ENCODE measurements at regions of chr4 and their contacts with region 1.

Region 1: GRCh38 chr4:158729716-158730559 is 6.7 kb upstream of the PPID start:
- DNase-seq: peak; percentile 45
- H3K4me3 ChIP-seq: no peak overlapping the region
- H3K27ac ChIP-seq: no peak overlapping the region
- H3K4me1 ChIP-seq: no peaks in the 10 kb centered on the region
- H3K27me3 ChIP-seq: peaks cover 2% of the 10 kb centered on the region
- CTCF ChIP-seq: peak; percentile 91 to 94

Region 2: DNA sequence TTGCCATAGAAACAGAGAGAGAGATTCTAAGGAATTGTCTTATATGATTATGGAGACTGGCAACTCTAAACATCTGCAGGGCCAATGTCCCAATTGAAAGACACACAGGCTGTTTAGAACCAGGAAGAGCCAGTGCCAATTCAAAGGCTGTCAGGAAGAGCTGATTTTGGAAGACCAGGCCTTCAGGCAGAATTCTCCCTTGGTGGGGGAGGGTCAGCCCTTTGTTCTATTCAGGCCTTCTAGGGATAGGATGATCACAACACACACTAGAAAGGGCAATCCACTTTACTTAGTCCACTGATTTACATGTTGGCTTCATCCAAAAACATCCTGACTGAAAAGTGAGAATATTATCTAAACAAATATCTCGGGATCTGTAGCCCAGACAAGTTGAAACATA is 73.5 kb before region 1 on chr4:
- CTCF ChIA-PET with region 1: no interaction called
- dilution Hi-C with region 1: no loop called
- in situ Hi-C with region 1: no loop called
- intact Hi-C with region 1: no loop called
- DNase-seq: no peak
- H3K4me3 ChIP-seq: no peak overlapping the region
- H3K27ac ChIP-seq: no peak overlapping the region
- H3K4me1 ChIP-seq: no peaks in the 10 kb centered on the region
- H3K27me3 ChIP-seq: no peaks in the 10 kb centered on the region
- CTCF ChIP-seq: no peak

Region 3: GRCh38 chr4:158768555-158769174 is 38.7 kb after region 1 on chr4 and contains the start of gene FNIP2:
- CTCF ChIA-PET with region 1: interaction called, 4 read pairs
- dilution Hi-C with region 1: no loop called
- in situ Hi-C with region 1: no loop called
- intact Hi-C with region 1: loop called (anchors 2 kb)
- DNase-seq: peak; percentile 61
- H3K4me3 ChIP-seq: peak within 1 kb of the TSS; percentile 67 to 98 (median 94)
- H3K27ac ChIP-seq: peak within 1 kb of the TSS; percentile 49
- H3K4me1 ChIP-seq: peaks cover 13% of the 10 kb centered on the region
- H3K27me3 ChIP-seq: no peaks in the 10 kb centered on the region
- CTCF ChIP-seq: no peak
- total RNA-seq, gene FNIP2: 13.0 to 29.5 TPM

Region 4: DNA sequence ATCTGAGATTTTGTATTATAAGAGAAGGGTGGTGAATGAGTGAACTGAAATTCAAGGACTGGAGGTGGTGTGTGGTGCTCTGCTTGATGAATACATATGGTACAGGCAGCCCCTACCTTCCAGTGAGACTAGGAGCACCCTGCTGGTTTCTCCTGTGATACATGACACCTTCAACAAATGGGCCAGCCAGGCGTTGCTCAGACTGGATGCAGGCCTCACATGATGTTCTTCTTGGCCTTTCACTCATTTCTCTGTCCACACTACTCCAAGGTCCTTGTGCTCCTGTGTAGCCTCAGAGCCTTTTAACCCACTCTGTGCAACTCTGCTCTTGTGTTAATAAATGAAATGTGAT is 106.1 kb after region 1 on chr4:
- CTCF ChIA-PET with region 1: no interaction called
- dilution Hi-C with region 1: no loop called
- in situ Hi-C with region 1: loop called in 1 of 2 experiments (anchors 10 kb)
- intact Hi-C with region 1: no loop called
- DNase-seq: no peak
- H3K4me3 ChIP-seq: no peak overlapping the region
- H3K27ac ChIP-seq: no peak overlapping the region
- H3K4me1 ChIP-seq: peaks cover 10% of the 10 kb centered on the region
- H3K27me3 ChIP-seq: no peaks in the 10 kb centered on the region
- CTCF ChIP-seq: no peak

Region 5: DNA sequence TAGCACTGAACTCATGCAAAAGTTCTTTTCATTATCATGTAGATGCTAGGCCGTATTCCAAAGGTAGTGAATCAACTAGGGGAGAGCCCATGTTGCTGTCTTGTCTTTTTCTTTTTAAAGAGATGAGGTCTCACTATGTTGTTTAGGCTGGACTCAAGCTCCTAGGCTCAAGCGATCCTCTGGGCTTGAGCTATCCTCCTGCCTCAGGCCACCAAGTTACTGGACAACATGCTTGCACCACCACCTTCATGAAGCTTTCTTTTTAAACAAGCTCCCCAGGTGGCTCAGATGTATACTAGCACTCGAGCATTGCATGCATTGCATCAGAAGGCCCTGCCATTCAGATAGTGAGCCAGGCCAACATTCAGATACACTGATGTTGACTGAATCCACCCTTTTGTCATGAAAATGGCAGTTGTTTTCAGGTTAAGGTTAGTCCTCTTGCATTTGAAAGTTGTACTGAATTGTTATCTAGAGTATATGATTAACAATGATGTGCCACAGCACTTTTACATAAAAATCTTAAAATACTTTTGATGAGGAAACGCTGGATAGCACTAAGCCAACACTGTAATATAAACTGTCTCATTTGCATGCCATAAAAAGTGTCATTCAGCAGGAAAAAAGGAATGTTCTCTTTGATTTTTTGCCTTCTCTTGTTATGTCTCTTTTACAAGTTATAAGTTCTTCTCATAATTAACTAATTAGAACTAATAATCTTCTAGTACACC is 115.5 kb after region 1 on chr4:
- CTCF ChIA-PET with region 1: no interaction called
- dilution Hi-C with region 1: no loop called
- in situ Hi-C with region 1: loop called (anchors 5 to 10 kb)
- intact Hi-C with region 1: loop called (anchors 1 kb)
- DNase-seq: no peak
- H3K4me3 ChIP-seq: no peak overlapping the region
- H3K27ac ChIP-seq: no peak overlapping the region
- H3K4me1 ChIP-seq: no peaks in the 10 kb centered on the region
- H3K27me3 ChIP-seq: no peaks in the 10 kb centered on the region
- CTCF ChIP-seq: no peak

Region 6: DNA sequence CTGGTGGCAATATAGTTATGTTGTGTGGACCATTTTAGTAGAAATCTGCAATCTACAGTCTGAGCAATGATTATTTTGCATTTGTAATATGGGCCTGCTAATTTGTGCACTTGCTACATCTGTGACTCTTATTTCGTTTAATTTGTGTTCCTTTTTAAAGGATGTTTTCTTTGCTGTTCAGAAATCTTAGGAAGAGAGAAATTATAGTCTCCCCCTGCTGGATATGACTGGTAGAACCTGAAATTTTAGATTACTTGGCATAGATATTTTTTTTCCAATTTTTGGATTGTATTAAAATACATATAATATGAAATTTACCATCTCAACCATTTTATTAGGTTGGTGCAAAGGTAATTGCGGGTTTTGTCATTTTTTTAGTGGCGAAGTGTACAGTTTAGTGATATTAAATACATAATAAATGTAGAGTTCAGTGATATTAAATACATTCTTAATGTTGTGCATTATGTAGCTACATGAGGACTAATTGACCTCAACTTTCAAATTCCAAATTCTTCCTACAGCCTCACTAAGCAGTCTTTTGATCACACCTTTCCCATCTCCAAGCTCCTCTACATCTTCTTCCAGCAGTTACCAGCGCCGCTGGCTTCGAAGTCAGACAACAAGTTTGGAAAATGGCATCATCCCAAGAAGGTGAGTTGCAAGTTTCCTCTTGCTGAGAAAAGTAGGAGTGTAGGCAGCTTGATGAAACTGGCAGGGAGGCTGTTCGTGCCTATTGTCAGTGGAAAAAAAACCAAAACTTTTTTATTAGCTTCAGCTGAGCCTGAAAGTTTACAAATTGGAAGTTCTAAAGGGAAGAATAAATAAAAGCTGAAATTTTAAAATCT is 121.1 kb after region 1 on chr4:
- CTCF ChIA-PET with region 1: interaction called, 5 read pairs
- dilution Hi-C with region 1: no loop called
- in situ Hi-C with region 1: loop called (anchors 5 to 10 kb)
- intact Hi-C with region 1: loop called (anchors 1 kb)
- DNase-seq: no peak
- H3K4me3 ChIP-seq: no peak overlapping the region
- H3K27ac ChIP-seq: no peak overlapping the region
- H3K4me1 ChIP-seq: no peaks in the 10 kb centered on the region
- H3K27me3 ChIP-seq: no peaks in the 10 kb centered on the region
- CTCF ChIP-seq: peak; percentile 55 to 56

Region 7: GRCh38 chr4:158970812-158971211 is 240.9 kb after region 1 on chr4:
- CTCF ChIA-PET with region 1: no interaction called
- dilution Hi-C with region 1: no loop called
- in situ Hi-C with region 1: no loop called
- intact Hi-C with region 1: no loop called
- DNase-seq: no peak
- H3K4me3 ChIP-seq: no peak overlapping the region
- H3K27ac ChIP-seq: no peak overlapping the region
- H3K4me1 ChIP-seq: no peaks in the 10 kb centered on the region
- H3K27me3 ChIP-seq: no peaks in the 10 kb centered on the region
- CTCF ChIP-seq: no peak

Region 8: GRCh38 chr4:159175085-159175988 is 445.4 kb after region 1 on chr4:
- CTCF ChIA-PET with region 1: no interaction called
- dilution Hi-C with region 1: no loop called
- in situ Hi-C with region 1: no loop called
- intact Hi-C with region 1: loop called (anchors 1 kb)
- DNase-seq: peak; percentile 80
- H3K4me3 ChIP-seq: peak overlapping the region; percentile 8 to 28 (median 24)
- H3K27ac ChIP-seq: peak overlapping the region; percentile 28
- H3K4me1 ChIP-seq: peaks cover 16% of the 10 kb centered on the region
- H3K27me3 ChIP-seq: no peaks in the 10 kb centered on the region
- CTCF ChIP-seq: peak; percentile 60 to 76

Region 9: DNA sequence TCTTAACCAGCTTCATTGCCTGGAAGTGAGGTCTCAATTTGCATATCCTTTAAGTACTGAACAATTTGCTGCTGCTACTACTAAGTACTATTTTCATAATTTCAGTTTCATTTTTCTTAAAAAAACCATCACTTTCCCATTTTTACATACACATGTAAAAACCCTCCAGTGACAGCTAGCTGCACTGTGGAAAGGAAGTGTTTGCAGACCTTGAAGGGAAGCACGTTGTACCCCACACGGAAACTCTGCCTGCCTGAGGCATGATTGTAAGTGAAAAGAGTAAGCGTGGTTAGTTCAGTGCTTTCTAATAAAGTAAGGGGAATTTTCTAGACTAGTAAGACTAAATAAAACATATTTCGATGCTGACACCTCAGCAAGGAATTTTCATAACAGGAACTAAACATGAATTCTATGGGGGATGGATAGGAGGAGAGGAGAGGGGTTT is 476.5 kb after region 1 on chr4:
- CTCF ChIA-PET with region 1: no interaction called
- dilution Hi-C with region 1: no loop called
- in situ Hi-C with region 1: loop called (anchors 10 kb)
- intact Hi-C with region 1: loop called (anchors 1 kb)
- DNase-seq: peak; percentile 60
- H3K4me3 ChIP-seq: peak overlapping the region in 1 of 3 experiments; percentile 20
- H3K27ac ChIP-seq: peak overlapping the region; percentile 20
- H3K4me1 ChIP-seq: peaks cover 7% of the 10 kb centered on the region
- H3K27me3 ChIP-seq: no peaks in the 10 kb centered on the region
- CTCF ChIP-seq: no peak

Measured in mammary epithelial cell (primary cell).